Activated naive CD4-positive, alpha-beta T cell treated with anti-CD3 and anti-CD28 coated beads for 36 hours (primary cell): ENCODE measurements at regions of chr13 and their contacts with region 1.

Region 1: DNA sequence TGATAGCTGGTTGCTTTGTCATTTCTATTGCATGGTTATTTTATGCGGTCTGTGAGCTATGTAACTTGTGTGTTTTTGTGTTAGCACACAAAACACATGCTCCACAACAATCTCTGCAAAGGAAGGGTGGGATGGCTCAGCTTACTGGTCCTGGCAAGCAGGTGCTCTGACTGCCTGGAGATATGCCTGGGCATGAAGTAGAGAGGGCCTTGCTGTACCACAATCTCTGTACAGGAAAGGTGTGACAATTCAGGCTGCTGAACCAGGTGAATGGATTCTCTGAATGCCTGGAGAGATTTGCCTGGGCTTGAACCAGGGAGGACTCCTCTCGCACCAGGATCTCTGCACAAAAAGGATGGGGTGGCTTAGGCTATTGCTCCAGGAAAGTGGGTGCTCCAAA is 69.5 kb downstream of the STOML3 start:
- DNase-seq: no peak
- H3K4me3 Mint-ChIP-seq: no peak overlapping the region
- H3K27ac Mint-ChIP-seq: no peak overlapping the region
- H3K4me1 Mint-ChIP-seq: no peaks in the 10 kb centered on the region
- H3K27me3 Mint-ChIP-seq: peaks cover 36% of the 10 kb centered on the region

Region 2: GRCh38 chr13:38743466-38743865 is 177.6 kb before region 1 on chr13:
- CTCF ChIA-PET with region 1: no interaction called
- intact Hi-C with region 1: no loop called
- DNase-seq: no peak
- H3K4me3 Mint-ChIP-seq: no peak overlapping the region
- H3K27ac Mint-ChIP-seq: no peak overlapping the region
- H3K4me1 Mint-ChIP-seq: no peaks in the 10 kb centered on the region
- H3K27me3 Mint-ChIP-seq: peaks cover 2% of the 10 kb centered on the region

Region 3: DNA sequence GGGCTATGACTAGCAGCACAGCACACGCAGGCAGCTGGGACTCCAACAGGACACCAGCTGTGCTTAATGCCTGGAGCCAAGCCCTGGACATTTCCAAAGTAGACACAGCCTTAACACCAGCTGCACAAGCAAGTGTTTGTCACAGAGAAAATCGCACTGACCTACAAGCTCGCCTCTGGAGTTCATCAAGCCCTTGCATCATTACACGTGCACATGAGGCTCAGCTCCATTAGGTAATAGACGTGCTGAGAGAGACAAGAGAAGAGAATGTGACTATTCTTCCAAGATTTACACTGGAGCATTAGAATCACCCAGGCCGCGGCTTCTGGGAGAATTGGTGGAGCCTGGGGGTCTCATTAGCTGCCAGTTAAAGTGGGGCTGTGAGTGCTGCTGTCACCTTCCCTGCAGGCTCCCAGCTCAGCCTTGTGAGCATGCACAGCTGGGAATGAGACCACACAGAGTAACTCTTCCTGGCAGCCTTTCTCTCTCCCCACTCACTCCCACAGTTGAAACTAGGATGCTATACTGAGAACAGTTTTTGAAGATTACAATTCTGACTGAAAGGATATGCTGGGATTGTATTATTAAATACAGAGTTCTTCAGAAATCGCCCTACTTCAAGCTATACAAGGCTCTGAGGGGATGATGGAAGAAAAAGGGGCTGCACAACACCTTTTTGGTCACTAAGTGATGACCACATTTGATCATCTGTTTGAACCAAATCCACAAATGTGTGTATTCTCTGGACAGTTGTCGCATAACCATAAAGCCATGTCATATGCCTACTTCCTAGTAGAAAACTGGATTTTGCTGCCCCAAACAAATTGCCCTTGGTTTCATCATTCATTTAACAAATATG is 59.0 kb after region 1 on chr13:
- CTCF ChIA-PET with region 1: no interaction called
- intact Hi-C with region 1: no loop called
- DNase-seq: no peak
- H3K4me3 Mint-ChIP-seq: no peak overlapping the region
- H3K27ac Mint-ChIP-seq: no peak overlapping the region
- H3K4me1 Mint-ChIP-seq: no peaks in the 10 kb centered on the region
- H3K27me3 Mint-ChIP-seq: no peaks in the 10 kb centered on the region

Region 4: GRCh38 chr13:39016787-39017186 is 95.7 kb after region 1 on chr13:
- CTCF ChIA-PET with region 1: no interaction called
- intact Hi-C with region 1: loop called (anchors 5 kb)
- DNase-seq: peak; percentile 19
- H3K4me3 Mint-ChIP-seq: no peak overlapping the region
- H3K27ac Mint-ChIP-seq: no peak overlapping the region
- H3K4me1 Mint-ChIP-seq: peaks cover 6% of the 10 kb centered on the region
- H3K27me3 Mint-ChIP-seq: no peaks in the 10 kb centered on the region

Region 5: DNA sequence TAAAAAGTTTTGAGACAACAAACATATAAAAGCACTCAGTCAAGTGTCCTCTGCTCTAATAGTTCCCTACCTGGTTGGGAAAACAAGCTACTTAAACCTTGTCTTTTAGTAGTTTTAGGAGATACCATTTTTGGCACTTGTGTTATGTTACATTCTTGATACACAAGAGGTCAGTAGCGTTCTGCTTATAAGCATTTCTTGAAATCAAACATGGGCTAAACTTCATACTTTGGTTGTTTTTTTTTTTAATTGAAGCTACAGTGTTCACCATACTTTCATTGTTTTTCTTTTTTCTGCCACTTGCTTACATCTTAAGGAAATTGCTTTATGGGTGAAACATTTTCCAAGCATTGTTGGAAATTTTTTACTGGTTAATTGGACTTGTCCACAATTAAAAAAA is 130.1 kb after region 1 on chr13:
- CTCF ChIA-PET with region 1: no interaction called
- intact Hi-C with region 1: no loop called
- DNase-seq: no peak
- H3K4me3 Mint-ChIP-seq: no peak overlapping the region
- H3K27ac Mint-ChIP-seq: no peak overlapping the region
- H3K4me1 Mint-ChIP-seq: peaks cover 14% of the 10 kb centered on the region
- H3K27me3 Mint-ChIP-seq: no peaks in the 10 kb centered on the region